CD8-positive, alpha-beta T cell (primary cell): ENCODE measurements at regions of chr7 and their contacts with region 1.

Region 1: GRCh38 chr7:12222889-12223579 is 11.9 kb downstream of the TMEM106B start:
- DNase-seq: peak in 2 of 9 experiments; percentile 33 to 62
- ATAC-seq: peak; percentile 63
- H3K4me3 ChIP-seq: no peak overlapping the region
- H3K4me3 Mint-ChIP-seq: peak overlapping the region; percentile 59
- H3K27ac ChIP-seq: peak overlapping the region in 1 of 2 experiments; percentile 38
- H3K27ac Mint-ChIP-seq: peak overlapping the region; percentile 78
- H3K4me1 ChIP-seq: peaks cover 34% of the 10 kb centered on the region
- H3K4me1 Mint-ChIP-seq: peaks cover 52% of the 10 kb centered on the region
- H3K27me3 ChIP-seq: no peaks in the 10 kb centered on the region
- H3K27me3 Mint-ChIP-seq: no peaks in the 10 kb centered on the region
- CTCF ChIP-seq: no peak

Region 2: GRCh38 chr7:12158334-12159060 is 64.5 kb before region 1 on chr7:
- CTCF ChIA-PET with region 1: no interaction called
- POLR2A ChIA-PET with region 1: no interaction called
- intact Hi-C with region 1: no loop called
- DNase-seq: no peak
- ATAC-seq: no peak
- H3K4me3 ChIP-seq: no peak overlapping the region
- H3K4me3 Mint-ChIP-seq: no peak overlapping the region
- H3K27ac ChIP-seq: no peak overlapping the region
- H3K27ac Mint-ChIP-seq: no peak overlapping the region
- H3K4me1 ChIP-seq: no peaks in the 10 kb centered on the region
- H3K4me1 Mint-ChIP-seq: no peaks in the 10 kb centered on the region
- H3K27me3 ChIP-seq: no peaks in the 10 kb centered on the region
- H3K27me3 Mint-ChIP-seq: peaks cover 5% of the 10 kb centered on the region
- CTCF ChIP-seq: no peak

Region 3: DNA sequence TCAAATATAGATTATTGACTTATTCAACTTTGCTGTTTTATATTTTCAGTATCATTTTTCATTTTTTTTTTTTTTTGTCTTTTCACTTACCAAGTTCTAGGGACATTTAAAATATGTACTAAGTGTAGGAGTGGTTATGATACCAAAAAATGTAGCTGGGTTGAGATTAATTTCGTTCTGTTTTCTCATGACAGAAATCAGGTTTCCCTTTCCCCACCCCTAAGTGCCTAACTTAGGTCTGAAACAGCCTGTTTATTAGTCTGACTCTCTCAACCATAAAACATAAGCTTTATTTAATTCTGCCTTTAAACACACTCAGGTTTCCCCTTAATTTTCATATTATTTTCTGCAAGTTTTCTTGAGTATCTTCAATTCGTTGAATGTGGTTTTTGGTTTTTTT is 10.1 kb after region 1 on chr7:
- CTCF ChIA-PET with region 1: no interaction called
- POLR2A ChIA-PET with region 1: no interaction called
- intact Hi-C with region 1: loop called in 1 of 2 experiments (anchors 2 kb)
- DNase-seq: no peak
- ATAC-seq: no peak
- H3K4me3 ChIP-seq: no peak overlapping the region
- H3K4me3 Mint-ChIP-seq: no peak overlapping the region
- H3K27ac ChIP-seq: no peak overlapping the region
- H3K27ac Mint-ChIP-seq: no peak overlapping the region
- H3K4me1 ChIP-seq: no peaks in the 10 kb centered on the region
- H3K4me1 Mint-ChIP-seq: peaks cover 7% of the 10 kb centered on the region
- H3K27me3 ChIP-seq: no peaks in the 10 kb centered on the region
- H3K27me3 Mint-ChIP-seq: no peaks in the 10 kb centered on the region
- CTCF ChIP-seq: no peak

Region 4: GRCh38 chr7:12239806-12240205 is 16.8 kb after region 1 on chr7:
- CTCF ChIA-PET with region 1: no interaction called
- POLR2A ChIA-PET with region 1: no interaction called
- intact Hi-C with region 1: loop called in 1 of 2 experiments (anchors 2 kb)
- DNase-seq: no peak
- ATAC-seq: no peak
- H3K4me3 ChIP-seq: no peak overlapping the region
- H3K4me3 Mint-ChIP-seq: no peak overlapping the region
- H3K27ac ChIP-seq: no peak overlapping the region
- H3K27ac Mint-ChIP-seq: peak overlapping the region; percentile 49
- H3K4me1 ChIP-seq: peaks cover 9% of the 10 kb centered on the region
- H3K4me1 Mint-ChIP-seq: peaks cover 20% of the 10 kb centered on the region
- H3K27me3 ChIP-seq: no peaks in the 10 kb centered on the region
- H3K27me3 Mint-ChIP-seq: no peaks in the 10 kb centered on the region
- CTCF ChIP-seq: no peak